CD4-positive, alpha-beta memory T cell (primary cell): ENCODE measurements at regions of chr2 and their contacts with region 1.

Region 1: GRCh38 chr2:221969087-221969829 is 329.5 kb downstream of the PAX3 start:
- DNase-seq: peak in 4 of 5 donors; percentile 2 to 20 (median 12)
- H3K4me3 ChIP-seq: no peak overlapping the region
- H3K4me3 Mint-ChIP-seq: no peak overlapping the region
- H3K27ac ChIP-seq: no peak overlapping the region
- H3K27ac Mint-ChIP-seq: no peak overlapping the region
- H3K4me1 ChIP-seq: no peaks in the 10 kb centered on the region
- H3K4me1 Mint-ChIP-seq: no peaks in the 10 kb centered on the region
- H3K27me3 ChIP-seq: no peaks in the 10 kb centered on the region
- H3K27me3 Mint-ChIP-seq: peaks cover 3 to 8% of the 10 kb centered on the region in 2 donors

Region 2: GRCh38 chr2:220687231-220687843 is 1281.9 kb before region 1 on chr2:
- CTCF ChIA-PET with region 1: no interaction called
- POLR2A ChIA-PET with region 1: no interaction called
- intact Hi-C with region 1: loop called (anchors 1 kb)
- DNase-seq: peak; percentile 47 to 57 (median 54)
- H3K4me3 ChIP-seq: no peak overlapping the region
- H3K4me3 Mint-ChIP-seq: no peak overlapping the region
- H3K27ac ChIP-seq: no peak overlapping the region
- H3K27ac Mint-ChIP-seq: peak overlapping the region in 1 of 7 donors; percentile 60
- H3K4me1 ChIP-seq: no peaks in the 10 kb centered on the region
- H3K4me1 Mint-ChIP-seq: no peaks in the 10 kb centered on the region
- H3K27me3 ChIP-seq: no peaks in the 10 kb centered on the region
- H3K27me3 Mint-ChIP-seq: peaks cover 2 to 12% of the 10 kb centered on the region in 2 donors